Mammary epithelial cell (primary cell): ENCODE measurements at regions of chr7 and their contacts with region 1.

Region 1: GRCh38 chr7:95871078-95871782 is 98.9 kb downstream of the DYNC1I1 start:
- DNase-seq: peak; percentile 34
- H3K4me3 ChIP-seq: no peak overlapping the region
- H3K27ac ChIP-seq: no peak overlapping the region
- H3K4me1 ChIP-seq: no peaks in the 10 kb centered on the region
- H3K27me3 ChIP-seq: no peaks in the 10 kb centered on the region
- CTCF ChIP-seq: peak; percentile 52 to 71

Region 2: GRCh38 chr7:95511716-95512260 is 359.4 kb before region 1 on chr7:
- CTCF ChIA-PET with region 1: no interaction called
- dilution Hi-C with region 1: no loop called
- in situ Hi-C with region 1: no loop called
- intact Hi-C with region 1: loop called (anchors 5 kb)
- DNase-seq: peak; percentile 44
- H3K4me3 ChIP-seq: no peak overlapping the region
- H3K27ac ChIP-seq: no peak overlapping the region
- H3K4me1 ChIP-seq: no peaks in the 10 kb centered on the region
- H3K27me3 ChIP-seq: peaks cover 2% of the 10 kb centered on the region
- CTCF ChIP-seq: peak; percentile 87 to 93

Region 3: GRCh38 chr7:95527033-95527775 is 344.0 kb before region 1 on chr7:
- CTCF ChIA-PET with region 1: no interaction called
- dilution Hi-C with region 1: no loop called
- in situ Hi-C with region 1: no loop called
- intact Hi-C with region 1: loop called (anchors 1 kb)
- DNase-seq: peak; percentile 20
- H3K4me3 ChIP-seq: no peak overlapping the region
- H3K27ac ChIP-seq: no peak overlapping the region
- H3K4me1 ChIP-seq: no peaks in the 10 kb centered on the region
- H3K27me3 ChIP-seq: peaks cover under 1% of the 10 kb centered on the region
- CTCF ChIP-seq: peak; percentile 85 to 95

Region 4: DNA sequence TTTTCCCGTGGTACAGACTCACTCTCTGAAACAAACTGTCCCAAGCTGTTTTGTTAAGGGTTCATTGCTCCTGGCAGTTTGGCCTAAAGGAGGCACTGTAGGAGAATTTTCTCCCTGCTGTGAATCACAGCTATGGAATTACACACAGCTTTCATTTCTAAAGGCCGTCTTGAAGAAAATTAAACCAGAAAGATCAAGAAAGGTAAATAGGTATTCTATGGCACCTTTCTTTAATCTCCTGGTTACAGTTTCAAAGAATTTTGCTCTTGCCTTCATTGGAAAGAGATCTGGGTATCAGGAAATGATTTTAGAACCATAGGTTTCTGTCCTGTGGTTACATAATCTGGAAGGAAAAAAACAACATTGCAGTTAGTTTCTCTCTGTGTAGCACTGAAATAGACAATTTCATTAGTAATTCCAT is 326.1 kb before region 1 on chr7:
- CTCF ChIA-PET with region 1: no interaction called
- dilution Hi-C with region 1: no loop called
- in situ Hi-C with region 1: no loop called
- intact Hi-C with region 1: no loop called
- DNase-seq: peak; percentile 54
- H3K4me3 ChIP-seq: peak overlapping the region in 1 of 3 experiments; percentile 25
- H3K27ac ChIP-seq: no peak overlapping the region
- H3K4me1 ChIP-seq: peaks cover 6% of the 10 kb centered on the region
- H3K27me3 ChIP-seq: no peaks in the 10 kb centered on the region
- CTCF ChIP-seq: peak; percentile 47 to 74

Region 5: DNA sequence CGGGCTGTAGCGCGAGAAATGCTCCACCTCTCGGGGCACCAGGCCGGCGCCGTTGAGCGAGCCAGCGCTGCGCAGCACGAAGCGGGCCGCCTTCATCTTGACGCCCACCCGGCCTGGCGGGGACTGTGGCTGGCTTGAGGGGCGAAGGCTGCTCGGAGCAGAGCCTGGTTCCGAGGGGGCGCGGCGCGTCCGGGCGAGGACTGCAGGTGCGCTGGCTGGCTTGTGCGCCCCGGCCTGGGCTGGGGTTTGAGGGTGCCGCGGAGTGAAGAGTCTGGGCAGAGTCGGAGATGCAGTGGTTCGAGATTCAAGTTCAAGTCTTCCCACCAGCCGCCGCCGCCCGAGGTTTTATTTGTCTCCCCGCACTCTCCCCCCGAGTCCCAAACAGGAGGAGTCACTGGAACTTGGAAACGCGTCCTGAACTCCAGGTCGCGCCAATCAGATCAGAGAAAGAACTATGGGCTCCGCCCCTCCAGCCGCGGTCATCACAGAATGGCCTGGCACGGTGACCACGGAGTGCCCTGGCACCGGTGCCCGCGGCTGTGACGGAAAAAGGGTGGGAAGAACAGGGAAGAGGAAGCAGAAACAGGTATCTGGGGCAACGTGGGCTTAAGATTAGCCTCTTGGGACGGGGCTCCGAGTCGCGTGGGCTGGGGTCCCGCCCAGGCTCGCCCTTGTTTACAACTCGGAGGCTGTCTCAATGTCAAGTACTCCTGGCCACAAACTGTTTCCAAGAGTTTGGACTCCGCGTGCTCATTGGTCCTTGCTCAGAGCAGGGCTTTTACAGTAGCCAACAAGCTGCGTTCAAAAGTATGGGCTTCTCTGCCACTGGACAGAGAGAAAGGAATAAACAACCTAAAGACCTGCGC is 274.8 kb before region 1 on chr7 and contains the start of gene PDK4:
- CTCF ChIA-PET with region 1: no interaction called
- dilution Hi-C with region 1: no loop called
- in situ Hi-C with region 1: no loop called
- intact Hi-C with region 1: no loop called
- DNase-seq: peak; percentile 1
- H3K4me3 ChIP-seq: peak within 1 kb of the TSS; percentile 32 to 44 (median 41)
- H3K27ac ChIP-seq: no peak within 1 kb of the TSS
- H3K4me1 ChIP-seq: peaks cover 9% of the 10 kb centered on the region
- H3K27me3 ChIP-seq: peaks cover 10% of the 10 kb centered on the region
- CTCF ChIP-seq: no peak
- total RNA-seq, gene PDK4: 1.8 TPM in 1 of 2 donors, not detected in the other

Region 6: GRCh38 chr7:95723592-95724180 is 147.5 kb before region 1 on chr7:
- CTCF ChIA-PET with region 1: interaction called, 5 read pairs
- dilution Hi-C with region 1: no loop called
- in situ Hi-C with region 1: loop called (anchors 5 kb)
- intact Hi-C with region 1: loop called (anchors 1 kb)
- DNase-seq: peak; percentile 22
- H3K4me3 ChIP-seq: no peak overlapping the region
- H3K27ac ChIP-seq: no peak overlapping the region
- H3K4me1 ChIP-seq: no peaks in the 10 kb centered on the region
- H3K27me3 ChIP-seq: no peaks in the 10 kb centered on the region
- CTCF ChIP-seq: peak; percentile 40 to 67

Region 7: DNA sequence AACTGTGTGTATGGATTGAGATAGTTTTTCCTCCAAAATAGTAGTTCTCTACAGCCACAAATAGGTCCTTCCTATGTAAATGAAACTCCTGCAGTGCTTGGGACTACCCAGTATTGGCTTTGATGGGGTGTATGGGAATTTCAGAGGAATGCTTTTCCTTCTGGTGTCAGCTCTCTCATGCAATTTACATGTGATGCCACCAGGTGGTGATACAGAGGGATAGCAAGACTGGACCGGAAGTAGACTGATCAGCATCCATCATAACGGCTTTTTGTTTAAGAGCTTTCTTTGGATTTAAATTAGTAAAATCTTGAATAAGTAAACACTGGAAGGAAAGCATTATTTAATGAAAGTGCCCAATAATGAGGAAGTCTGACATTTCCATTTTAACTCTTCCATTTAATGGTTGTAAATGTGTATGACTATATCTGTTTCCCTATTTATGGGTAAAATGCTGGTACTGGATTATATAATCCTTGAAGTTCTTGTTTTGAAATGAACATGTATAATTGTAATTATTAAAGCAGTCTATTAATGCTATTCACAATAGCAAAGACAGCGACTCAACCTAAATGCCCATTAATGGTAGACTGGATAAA is 76.2 kb before region 1 on chr7:
- CTCF ChIA-PET with region 1: no interaction called
- dilution Hi-C with region 1: no loop called
- in situ Hi-C with region 1: no loop called
- intact Hi-C with region 1: loop called (anchors 1 kb)
- DNase-seq: no peak
- H3K4me3 ChIP-seq: no peak overlapping the region
- H3K27ac ChIP-seq: no peak overlapping the region
- H3K4me1 ChIP-seq: no peaks in the 10 kb centered on the region
- H3K27me3 ChIP-seq: no peaks in the 10 kb centered on the region
- CTCF ChIP-seq: peak; percentile 55 to 72

Region 8: DNA sequence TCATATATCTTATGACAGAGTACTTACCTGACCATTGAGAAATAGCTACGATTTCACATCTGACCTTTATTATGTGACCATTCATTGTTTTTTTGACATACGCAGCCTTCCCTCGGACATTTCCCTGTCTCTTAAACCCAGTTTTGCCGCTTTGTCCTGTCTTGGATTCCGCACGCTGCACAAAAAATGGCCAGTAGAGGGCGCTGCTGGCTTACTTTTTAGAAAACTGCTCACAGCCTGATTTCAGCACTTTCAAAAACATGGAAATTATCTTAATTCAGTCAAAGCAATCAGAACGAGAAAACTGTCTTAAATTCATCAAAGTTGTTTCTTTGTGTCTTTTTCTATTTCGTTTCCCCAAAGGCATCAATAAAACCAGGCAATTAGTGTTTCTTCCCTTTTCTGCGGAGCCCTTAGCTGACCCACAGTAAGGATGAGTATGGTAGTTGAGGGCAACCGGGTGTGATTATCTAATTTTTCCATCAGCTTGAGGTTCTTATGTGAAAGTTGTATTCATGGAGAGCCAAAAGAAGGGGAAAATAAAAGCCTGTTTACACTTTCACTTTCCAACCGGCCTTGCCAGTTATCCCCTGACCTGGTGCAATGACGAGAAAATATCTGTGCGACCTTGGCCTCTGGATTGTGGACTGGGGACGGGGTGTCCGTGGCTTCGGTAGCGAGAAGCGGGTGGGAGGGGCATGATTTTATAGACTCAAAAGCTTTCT is 45.5 kb after region 1 on chr7:
- CTCF ChIA-PET with region 1: no interaction called
- dilution Hi-C with region 1: no loop called
- in situ Hi-C with region 1: no loop called
- intact Hi-C with region 1: no loop called
- DNase-seq: peak; percentile 35
- H3K4me3 ChIP-seq: no peak overlapping the region
- H3K27ac ChIP-seq: no peak overlapping the region
- H3K4me1 ChIP-seq: no peaks in the 10 kb centered on the region
- H3K27me3 ChIP-seq: no peaks in the 10 kb centered on the region
- CTCF ChIP-seq: peak; percentile 85 to 92